Natural killer cell (primary cell): ENCODE measurements at regions of chr19 and their contacts with region 1.

Region 1: DNA sequence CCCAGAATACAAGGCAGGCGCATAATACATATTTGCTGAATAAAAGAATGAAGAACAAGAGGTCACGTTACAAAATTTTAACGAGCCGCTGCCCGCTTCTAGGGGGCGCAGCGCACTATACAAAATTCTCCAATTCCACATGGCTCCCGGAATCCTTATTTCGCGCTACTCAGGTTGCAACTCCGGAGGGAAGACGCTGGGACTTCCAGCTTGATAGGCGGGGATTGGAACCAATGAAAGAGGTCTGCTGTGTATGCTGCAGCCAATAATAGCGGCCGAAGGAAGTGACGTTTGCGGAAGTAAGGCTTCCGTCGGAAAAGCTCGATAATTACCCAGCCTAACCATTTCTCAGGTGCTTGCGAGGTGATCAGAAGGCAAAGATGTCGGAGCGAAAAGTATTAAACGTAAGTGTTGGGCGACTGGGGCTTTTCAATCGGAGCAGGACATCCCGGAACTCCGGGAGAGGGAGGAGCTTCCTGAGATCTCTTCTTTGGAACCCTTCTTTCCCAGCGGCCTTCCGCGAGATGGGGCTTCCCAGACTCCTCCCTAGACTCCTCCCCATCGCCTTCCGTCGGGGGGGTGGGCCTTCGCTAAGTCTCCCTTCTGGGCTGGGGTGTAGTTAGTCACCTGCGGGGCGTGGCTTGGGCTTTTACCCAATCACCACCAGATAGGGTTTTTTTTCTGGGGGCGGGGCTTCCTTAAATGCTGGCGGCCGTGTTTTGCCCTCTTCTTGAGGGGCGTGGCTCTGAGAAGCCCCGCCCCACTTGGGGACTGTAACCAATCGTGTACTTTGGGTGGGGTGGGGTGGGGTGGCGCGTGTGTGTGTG is at the start of gene YJU2:
- DNase-seq: peak; percentile 96 to 100
- ATAC-seq: peak; percentile 93 to 98 (median 94)
- H3K4me3 ChIP-seq: peak within 1 kb of the TSS; percentile 87
- H3K4me3 Mint-ChIP-seq: peak within 1 kb of the TSS; percentile 88
- H3K27ac ChIP-seq: peak within 1 kb of the TSS; percentile 98
- H3K27ac Mint-ChIP-seq: peak within 1 kb of the TSS; percentile 96 to 100
- H3K4me1 ChIP-seq: peaks cover 16% of the 10 kb centered on the region
- H3K4me1 Mint-ChIP-seq: peaks cover 6 to 31% of the 10 kb centered on the region in 2 donors
- H3K27me3 ChIP-seq: no peaks in the 10 kb centered on the region
- H3K27me3 Mint-ChIP-seq: peaks cover 0 to 2% of the 10 kb centered on the region in 2 donors
- CTCF ChIP-seq: peak; percentile 43
- total RNA-seq, gene YJU2: 37.7 to 39.5 (median 38.5) TPM

Region 2: GRCh38 chr19:4328243-4328990 is 81.4 kb after region 1 on chr19:
- intact Hi-C with region 1: loop called (anchors 1 kb)
- DNase-seq: peak; percentile 92 to 96
- ATAC-seq: peak; percentile 85 to 96 (median 86)
- H3K4me3 ChIP-seq: peak overlapping the region; percentile 60
- H3K4me3 Mint-ChIP-seq: peak overlapping the region; percentile 90
- H3K27ac ChIP-seq: peak overlapping the region; percentile 39
- H3K27ac Mint-ChIP-seq: peak overlapping the region; percentile 73 to 92
- H3K4me1 ChIP-seq: peaks cover 30% of the 10 kb centered on the region
- H3K4me1 Mint-ChIP-seq: peaks cover 16 to 33% of the 10 kb centered on the region in 2 donors
- H3K27me3 ChIP-seq: no peaks in the 10 kb centered on the region
- H3K27me3 Mint-ChIP-seq: no peaks in the 10 kb centered on the region
- CTCF ChIP-seq: no peak

Region 3: GRCh38 chr19:4342615-4343369 is 95.8 kb after region 1 on chr19:
- intact Hi-C with region 1: loop called (anchors 5 kb)
- DNase-seq: peak; percentile 87 to 98
- ATAC-seq: peak; percentile 79 to 92 (median 80)
- H3K4me3 ChIP-seq: peak overlapping the region; percentile 90
- H3K4me3 Mint-ChIP-seq: peak overlapping the region; percentile 93
- H3K27ac ChIP-seq: peak overlapping the region; percentile 89
- H3K27ac Mint-ChIP-seq: peak overlapping the region; percentile 79 to 92
- H3K4me1 ChIP-seq: peaks cover 51% of the 10 kb centered on the region
- H3K4me1 Mint-ChIP-seq: peaks cover 24 to 59% of the 10 kb centered on the region in 2 donors
- H3K27me3 ChIP-seq: no peaks in the 10 kb centered on the region
- H3K27me3 Mint-ChIP-seq: no peaks in the 10 kb centered on the region
- CTCF ChIP-seq: peak; percentile 27

Region 4: DNA sequence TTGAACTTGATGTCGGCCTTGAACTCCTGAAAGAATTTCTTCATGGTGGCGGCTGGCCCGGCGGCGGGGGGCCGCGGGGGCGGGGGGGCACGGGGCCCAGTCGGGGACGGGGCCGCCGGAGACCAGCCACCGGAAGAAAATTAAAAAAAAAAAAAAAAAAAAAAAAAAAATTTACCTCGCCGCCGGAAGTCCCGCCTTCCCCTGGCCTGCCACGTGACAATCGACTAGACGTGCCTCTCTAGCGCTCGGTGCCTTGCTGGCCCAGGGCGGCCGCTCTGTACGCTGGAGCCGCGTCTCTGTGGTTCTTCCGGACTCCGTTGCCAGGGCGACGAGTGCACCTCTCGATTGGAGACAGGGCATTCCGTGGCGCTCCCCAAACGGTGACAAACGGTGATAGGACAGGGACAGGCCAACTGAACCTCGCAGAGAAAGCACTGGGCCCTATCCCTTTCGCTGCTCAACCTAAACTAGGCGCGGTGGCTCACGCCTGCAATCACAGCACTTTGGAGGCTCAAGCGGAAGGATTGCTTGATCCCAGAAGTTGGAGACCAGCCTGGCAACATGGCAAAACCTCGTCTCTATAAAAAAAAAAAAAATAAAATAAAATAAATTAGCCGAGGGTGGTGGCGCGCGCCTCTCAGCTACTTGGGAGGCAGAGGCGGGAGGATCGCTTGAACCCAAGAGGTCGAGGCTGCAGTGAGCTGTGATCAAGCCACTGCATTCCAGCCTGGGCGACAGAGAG is 210.8 kb after region 1 on chr19 and contains the start of gene UBXN6:
- intact Hi-C with region 1: loop called (anchors 5 kb)
- DNase-seq: peak; percentile 95 to 99
- ATAC-seq: peak; percentile 96 to 99 (median 98)
- H3K4me3 ChIP-seq: peak within 1 kb of the TSS; percentile 45
- H3K4me3 Mint-ChIP-seq: peak within 1 kb of the TSS; percentile 94
- H3K27ac ChIP-seq: peak within 1 kb of the TSS; percentile 38
- H3K27ac Mint-ChIP-seq: peak within 1 kb of the TSS; percentile 89 to 97
- H3K4me1 ChIP-seq: peaks cover 24% of the 10 kb centered on the region
- H3K4me1 Mint-ChIP-seq: peaks cover 10 to 28% of the 10 kb centered on the region in 2 donors
- H3K27me3 ChIP-seq: no peaks in the 10 kb centered on the region
- H3K27me3 Mint-ChIP-seq: no peaks in the 10 kb centered on the region
- CTCF ChIP-seq: no peak
- total RNA-seq, gene UBXN6: 54.3 to 67.7 (median 63.3) TPM

Region 5: DNA sequence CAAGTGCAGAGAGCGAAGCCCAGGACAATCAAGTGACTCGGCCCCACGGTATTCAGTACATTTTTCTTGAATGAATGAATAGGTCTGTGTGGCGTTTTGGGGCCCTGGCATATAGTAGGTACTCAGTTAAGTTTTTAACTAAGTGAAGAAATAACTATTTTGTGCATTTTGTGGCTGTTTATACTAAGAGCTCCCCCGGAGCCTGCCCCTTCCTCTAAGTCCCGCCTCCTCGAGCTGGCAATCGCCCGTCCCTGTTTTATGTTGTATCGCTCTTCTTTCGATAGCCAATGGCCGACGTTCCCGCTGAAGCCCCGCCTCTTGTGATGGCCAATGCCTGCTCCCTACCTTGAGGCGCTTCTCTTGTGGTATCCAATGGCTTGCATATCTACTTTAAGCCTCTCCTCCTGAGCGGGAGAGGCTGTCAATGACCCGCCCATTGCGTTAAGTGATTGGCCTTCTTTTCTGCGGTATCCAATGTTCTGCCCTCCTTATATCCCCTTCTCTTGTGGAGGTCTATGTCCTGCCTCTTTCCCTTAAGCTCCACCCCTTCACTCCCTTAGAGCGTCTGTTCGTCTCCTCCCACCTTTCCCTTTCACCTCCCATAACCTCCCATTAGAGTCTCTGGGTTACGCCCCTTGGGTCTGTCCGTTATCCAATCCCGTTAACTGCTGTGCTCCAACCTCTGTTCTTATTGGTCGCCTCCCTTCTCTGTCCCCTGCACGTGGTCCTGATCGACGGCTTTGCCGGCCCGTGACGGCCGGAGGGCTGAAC is 224.6 kb after region 1 on chr19:
- intact Hi-C with region 1: loop called (anchors 1 kb)
- DNase-seq: peak; percentile 95 to 100
- ATAC-seq: peak; percentile 82 to 93 (median 82)
- H3K4me3 ChIP-seq: peak overlapping the region; percentile 77
- H3K4me3 Mint-ChIP-seq: no peak overlapping the region
- H3K27ac ChIP-seq: peak overlapping the region; percentile 82
- H3K27ac Mint-ChIP-seq: no peak overlapping the region
- H3K4me1 ChIP-seq: peaks cover 35% of the 10 kb centered on the region
- H3K4me1 Mint-ChIP-seq: peaks cover 20 to 25% of the 10 kb centered on the region in 2 donors
- H3K27me3 ChIP-seq: no peaks in the 10 kb centered on the region
- H3K27me3 Mint-ChIP-seq: no peaks in the 10 kb centered on the region
- CTCF ChIP-seq: no peak